ENCODE measurements at regions of chr13 and their contacts with region 1.

Region 1: DNA sequence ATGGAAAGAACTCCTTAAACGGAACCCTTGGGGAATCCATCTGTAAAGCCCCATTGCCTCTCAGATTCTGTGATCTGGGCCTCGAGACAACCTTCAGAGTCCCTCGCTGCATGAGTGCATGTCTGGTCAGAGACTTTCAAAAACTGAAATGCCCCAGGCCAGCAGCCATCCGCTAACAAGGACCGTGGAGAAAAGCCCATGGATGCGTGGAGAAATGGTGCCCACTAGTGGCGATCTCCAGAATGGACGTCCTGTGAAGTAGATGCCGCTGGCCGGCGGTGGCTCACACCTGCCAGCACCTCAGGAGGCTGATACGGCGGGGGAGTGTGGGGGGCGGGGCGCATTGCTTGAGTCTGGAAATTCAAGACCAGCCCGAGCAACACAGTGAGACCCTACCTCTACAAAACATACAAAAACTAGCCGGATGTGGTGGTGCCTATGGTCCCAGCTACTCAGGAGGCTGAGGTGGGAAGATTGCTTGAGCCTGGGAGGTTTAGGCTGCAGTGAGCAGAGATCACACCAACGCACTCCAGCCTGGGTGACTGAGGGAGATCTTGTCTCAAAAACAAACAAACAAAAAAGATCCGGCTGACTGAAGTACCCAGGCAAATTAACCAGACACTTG is 7.9 kb upstream of the CDC16 start:
- H3K4me3 Mint-ChIP-seq: no peak overlapping the region
- H3K27ac Mint-ChIP-seq: no peak overlapping the region
- H3K4me1 Mint-ChIP-seq: peaks cover 37% of the 10 kb centered on the region
- H3K27me3 Mint-ChIP-seq: peaks cover 10% of the 10 kb centered on the region

Region 2: GRCh38 chr13:113816946-113817859 is 409.6 kb before region 1 on chr13:
- intact Hi-C with region 1: loop called (anchors 1 kb)
- H3K4me3 Mint-ChIP-seq: peak overlapping the region; percentile 84
- H3K27ac Mint-ChIP-seq: peak overlapping the region; percentile 89
- H3K4me1 Mint-ChIP-seq: peaks cover 39% of the 10 kb centered on the region
- H3K27me3 Mint-ChIP-seq: peaks cover 1% of the 10 kb centered on the region

Region 3: GRCh38 chr13:113951246-113951999 is 275.4 kb before region 1 on chr13:
- intact Hi-C with region 1: loop called (anchors 1 kb)
- H3K4me3 Mint-ChIP-seq: peak overlapping the region; percentile 35
- H3K27ac Mint-ChIP-seq: no peak overlapping the region
- H3K4me1 Mint-ChIP-seq: peaks cover 37% of the 10 kb centered on the region
- H3K27me3 Mint-ChIP-seq: peaks cover 24% of the 10 kb centered on the region

Region 4: GRCh38 chr13:114049026-114049425 is 177.8 kb before region 1 on chr13:
- intact Hi-C with region 1: no loop called
- H3K4me3 Mint-ChIP-seq: peak overlapping the region; percentile 20
- H3K27ac Mint-ChIP-seq: peak overlapping the region; percentile 26
- H3K4me1 Mint-ChIP-seq: peaks cover 64% of the 10 kb centered on the region
- H3K27me3 Mint-ChIP-seq: peaks cover 5% of the 10 kb centered on the region

Region 5: DNA sequence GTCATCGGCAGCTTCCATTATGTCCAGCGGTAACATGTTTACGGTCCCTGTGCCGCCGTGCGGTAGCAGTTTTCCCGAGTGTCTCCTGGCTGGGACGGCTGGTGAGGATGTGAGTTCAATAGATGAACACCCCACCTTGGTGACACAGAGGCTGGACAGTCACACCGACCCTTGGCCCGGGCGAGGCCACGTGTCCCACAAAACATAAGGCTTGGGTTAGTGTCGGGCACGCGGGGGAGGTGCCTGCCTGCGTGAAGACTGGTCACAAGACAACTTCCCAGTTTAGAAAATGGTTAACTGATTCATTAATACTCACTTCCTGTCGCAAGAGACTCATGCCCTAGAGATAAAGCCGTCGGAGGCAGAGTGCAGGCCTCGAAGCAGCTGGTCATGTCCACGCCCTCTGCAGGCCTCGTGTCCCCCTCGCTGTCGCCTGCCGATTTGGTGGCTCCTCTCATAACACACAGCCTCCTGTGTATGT is 111.6 kb before region 1 on chr13:
- intact Hi-C with region 1: loop called (anchors 5 kb)
- H3K4me3 Mint-ChIP-seq: no peak overlapping the region
- H3K27ac Mint-ChIP-seq: peak overlapping the region; percentile 89
- H3K4me1 Mint-ChIP-seq: peaks cover 67% of the 10 kb centered on the region
- H3K27me3 Mint-ChIP-seq: no peaks in the 10 kb centered on the region

Region 6: DNA sequence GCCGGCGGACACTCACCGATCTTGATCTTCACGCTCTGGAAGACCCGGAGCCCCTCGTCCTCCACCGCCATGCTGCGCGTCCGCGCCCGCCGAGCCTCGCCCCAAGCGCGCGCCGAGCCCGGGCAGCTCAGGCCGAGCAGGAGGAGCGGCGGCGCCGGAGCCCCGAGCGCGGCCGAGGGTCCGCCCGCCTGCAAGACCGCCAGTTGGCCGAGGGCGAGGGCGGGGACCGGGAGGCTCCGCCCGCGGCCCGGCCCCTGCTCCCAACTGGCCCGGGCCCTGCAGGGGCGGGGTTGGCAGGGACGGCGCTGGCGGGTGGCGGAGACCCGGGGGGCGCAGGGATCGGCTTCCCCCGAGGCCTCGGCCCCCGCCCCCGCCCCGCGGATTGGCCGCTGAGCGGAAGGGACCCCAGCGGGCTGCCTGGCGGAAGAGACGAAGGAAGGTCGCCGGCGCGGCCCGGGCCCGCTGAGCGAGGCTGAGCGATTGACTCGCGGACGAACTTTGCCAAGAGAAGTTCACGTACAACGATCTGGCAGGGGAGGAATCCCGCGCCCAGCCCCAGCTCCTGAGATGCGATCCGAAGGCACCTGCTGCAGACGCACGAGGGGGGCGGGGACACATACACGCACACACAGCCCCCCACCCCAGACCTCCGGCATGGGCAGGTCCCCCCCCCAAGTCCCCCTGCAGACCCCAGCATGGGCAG is 94.2 kb before region 1 on chr13 and contains the start of gene RASA3:
- intact Hi-C with region 1: loop called (anchors 5 kb)
- H3K4me3 Mint-ChIP-seq: peak within 1 kb of the TSS; percentile 90
- H3K27ac Mint-ChIP-seq: peak within 1 kb of the TSS; percentile 84
- H3K4me1 Mint-ChIP-seq: peaks cover 52% of the 10 kb centered on the region
- H3K27me3 Mint-ChIP-seq: peaks cover 13% of the 10 kb centered on the region

Region 7: DNA sequence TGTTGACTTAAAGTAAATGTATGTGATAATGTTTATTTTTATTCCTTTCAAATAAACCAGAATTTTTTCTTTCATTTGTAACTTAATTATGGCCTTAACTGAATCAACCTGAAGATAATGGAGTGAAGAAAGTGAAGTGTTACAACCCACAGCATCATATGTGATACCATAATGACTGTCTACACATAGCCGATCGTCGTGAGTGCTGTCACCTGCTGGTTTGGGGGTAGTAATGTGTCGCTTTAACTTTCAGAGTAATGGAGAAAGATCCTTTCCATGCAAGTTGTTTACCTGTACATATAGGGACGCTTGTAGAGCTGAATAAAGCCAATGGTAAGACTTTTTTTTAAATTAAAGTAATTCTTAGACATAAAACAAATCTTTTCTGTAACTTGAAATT is 17.8 kb after region 1 on chr13:
- intact Hi-C with region 1: no loop called
- H3K4me3 Mint-ChIP-seq: no peak overlapping the region
- H3K27ac Mint-ChIP-seq: no peak overlapping the region
- H3K4me1 Mint-ChIP-seq: peaks cover 5% of the 10 kb centered on the region
- H3K27me3 Mint-ChIP-seq: no peaks in the 10 kb centered on the region